ENCODE measurements at regions of chr20 and their contacts with region 1.

Region 1: DNA sequence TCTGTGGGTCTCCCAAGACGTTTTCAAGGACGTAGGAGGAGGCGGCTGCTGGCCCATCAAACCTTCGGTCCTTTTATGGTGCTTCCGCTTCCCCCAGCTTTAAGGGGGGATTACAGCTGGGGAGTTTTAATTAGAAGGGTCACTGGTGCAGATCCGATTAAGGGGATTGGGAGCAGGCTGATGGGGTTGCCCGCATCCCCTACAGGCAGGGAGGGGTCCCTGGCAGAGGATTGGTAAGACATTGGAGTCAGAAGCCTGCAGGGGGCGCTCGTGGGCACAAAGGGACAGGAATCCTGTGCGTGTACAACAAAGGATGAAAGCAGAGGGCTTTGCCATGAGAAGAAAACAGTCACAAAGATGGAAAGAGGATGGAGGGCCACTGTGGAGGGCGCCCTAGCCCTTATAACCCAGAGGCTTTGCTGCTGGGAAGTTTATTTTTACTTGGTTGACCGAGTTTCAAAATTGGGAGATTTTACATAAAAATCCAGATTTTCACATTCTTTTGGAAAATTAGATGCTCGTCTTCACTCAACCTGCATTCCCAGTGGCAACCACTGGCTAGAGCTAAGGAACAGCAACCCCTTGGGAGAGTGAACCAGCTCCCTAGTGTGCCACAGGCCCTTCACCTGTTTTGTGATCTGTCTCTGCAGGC is 97.9 kb downstream of the KCNB1 start:
- DNase-seq: peak; percentile 71
- H3K4me3 ChIP-seq: no peak overlapping the region
- H3K27ac ChIP-seq: no peak overlapping the region
- H3K4me1 ChIP-seq: peaks cover 0 to 26% (median 13%) of the 10 kb centered on the region in 4 donors
- H3K27me3 ChIP-seq: peaks cover 4% of the 10 kb centered on the region
- CTCF ChIP-seq: peak; percentile 58 to 79 (median 68)
- EP300 ChIP-seq: no peak
- POLR2A ChIP-seq: no peak

Region 2: DNA sequence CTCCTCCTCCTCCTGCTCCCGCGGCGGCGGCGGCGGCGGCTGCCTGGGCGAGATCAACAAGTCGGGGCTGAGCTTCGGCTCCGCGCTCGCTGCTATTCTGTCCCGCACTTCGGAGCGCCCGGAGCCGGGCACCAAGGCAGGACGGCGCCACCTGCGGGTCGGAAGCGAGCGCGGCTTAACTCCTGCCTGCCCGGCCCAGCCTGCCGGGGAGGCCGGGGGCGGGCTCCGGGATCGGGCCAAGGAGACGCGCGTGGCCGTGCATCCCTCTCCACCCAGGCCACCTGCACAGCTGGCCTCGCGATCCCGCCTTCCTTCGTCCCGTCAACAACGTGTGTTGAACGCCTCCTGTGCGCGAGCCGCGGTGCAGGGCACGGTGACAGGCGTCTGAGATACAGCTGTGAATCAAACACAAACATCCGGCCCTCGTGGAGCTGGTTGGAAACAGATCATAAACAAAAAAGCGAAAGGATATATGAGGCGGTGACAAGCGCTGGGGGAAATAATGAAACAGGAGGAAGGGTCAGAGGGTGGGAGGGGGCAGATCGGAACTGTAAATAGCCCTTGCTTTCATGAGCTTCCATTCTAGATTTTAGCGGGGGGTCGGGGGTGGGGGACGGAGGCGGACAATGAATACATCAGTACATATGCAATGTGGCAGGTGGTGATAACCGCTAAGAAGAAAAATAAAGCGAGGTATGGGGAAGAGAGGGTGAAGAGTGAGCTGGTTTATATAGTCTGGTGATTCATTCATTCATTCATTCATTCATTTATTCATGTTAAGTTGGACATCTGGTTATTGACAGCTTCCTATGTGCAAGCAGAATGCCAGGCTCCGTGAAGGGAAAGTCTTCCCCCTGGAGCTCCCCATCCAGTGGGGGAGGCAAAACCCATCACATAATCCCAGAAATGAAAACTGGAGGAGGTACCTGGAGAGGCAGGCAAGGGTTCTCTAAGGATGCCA is 99.9 kb after region 1 on chr20:
- in situ Hi-C with region 1: loop called in 1 of 4 experiments (anchors 10 kb)
- intact Hi-C with region 1: loop called (anchors 5 kb)
- DNase-seq: peak; percentile 76
- H3K4me3 ChIP-seq: peak overlapping the region; percentile 12 to 41 (median 24)
- H3K27ac ChIP-seq: peak overlapping the region in 3 of 4 donors; percentile 8 to 22 (median 10)
- H3K4me1 ChIP-seq: peaks cover 2 to 15% (median 11%) of the 10 kb centered on the region in 4 donors
- H3K27me3 ChIP-seq: peaks cover 64% of the 10 kb centered on the region
- CTCF ChIP-seq: peak; percentile 71 to 85 (median 75)
- EP300 ChIP-seq: no peak
- POLR2A ChIP-seq: no peak

Region 3: GRCh38 chr20:51206032-51206662 is 1821.6 kb after region 1 on chr20:
- in situ Hi-C with region 1: no loop called
- intact Hi-C with region 1: no loop called
- DNase-seq: no peak
- H3K4me3 ChIP-seq: no peak overlapping the region
- H3K27ac ChIP-seq: no peak overlapping the region
- H3K4me1 ChIP-seq: peaks cover 0 to 1% (median 0%) of the 10 kb centered on the region in 4 donors
- H3K27me3 ChIP-seq: peaks cover 8% of the 10 kb centered on the region
- CTCF ChIP-seq: no peak
- EP300 ChIP-seq: no peak
- POLR2A ChIP-seq: no peak